Colonic mucosa (tissue), 4 donors: ENCODE measurements at regions of chr20 and their contacts with region 1.

Region 1: GRCh38 chr20:44683263-44684046 is 31.7 kb upstream of the CCN5 start:
- DNase-seq: peak; percentile 56
- H3K4me3 ChIP-seq: no peak overlapping the region
- H3K27ac ChIP-seq: no peak overlapping the region
- H3K4me1 ChIP-seq: no peaks in the 10 kb centered on the region
- H3K27me3 ChIP-seq: no peaks in the 10 kb centered on the region
- CTCF ChIP-seq: peak; percentile 56

Region 2: DNA sequence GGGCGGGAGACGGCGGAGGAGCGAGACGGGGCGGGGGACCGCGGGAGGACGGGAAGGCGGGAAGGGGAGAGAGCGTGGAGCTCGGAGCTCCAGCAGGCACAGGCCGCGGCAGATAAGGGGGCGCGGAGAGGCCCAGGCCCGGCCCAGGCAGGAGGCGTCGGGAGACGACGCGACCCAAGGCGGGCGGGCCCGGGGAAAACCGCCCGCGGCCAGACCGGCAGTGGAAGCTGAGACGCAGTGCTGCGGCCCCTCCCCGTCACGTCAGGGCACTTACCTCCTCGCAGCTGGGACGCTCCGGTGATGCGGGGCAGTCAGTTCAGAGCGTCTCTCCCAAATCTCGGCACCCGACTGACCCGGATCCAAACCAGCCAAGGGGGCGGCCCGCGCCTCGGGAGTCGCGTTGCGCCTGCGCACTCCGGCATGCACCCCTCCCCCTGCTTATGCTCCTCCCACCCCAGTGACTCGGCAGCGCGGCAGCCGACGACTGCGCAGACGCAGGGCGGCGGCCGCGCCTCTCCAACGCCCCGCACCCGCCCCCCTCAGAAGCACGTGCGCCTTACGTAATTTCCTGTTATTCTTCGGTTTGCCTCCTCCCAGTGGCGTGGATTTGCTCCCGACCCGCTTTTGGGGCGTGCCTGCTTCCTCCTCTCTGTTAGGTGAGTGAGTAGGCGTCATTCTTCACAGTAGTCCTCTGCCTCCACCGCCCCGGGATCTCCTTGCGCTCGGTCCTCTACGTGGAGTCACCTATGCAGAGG is 472.9 kb before region 1 on chr20 and contains the start of gene OSER1:
- intact Hi-C with region 1: loop called (anchors 10 kb)
- DNase-seq: peak; percentile 99
- H3K4me3 ChIP-seq: peak within 1 kb of the TSS; percentile 89
- H3K27ac ChIP-seq: peak within 1 kb of the TSS; percentile 99
- H3K4me1 ChIP-seq: peaks cover 3% of the 10 kb centered on the region
- H3K27me3 ChIP-seq: no peaks in the 10 kb centered on the region
- CTCF ChIP-seq: no peak
- total RNA-seq, gene OSER1: 23.3 to 31.9 TPM

Region 3: GRCh38 chr20:44733341-44734069 is 50.0 kb after region 1 on chr20:
- intact Hi-C with region 1: loop called (anchors 1 kb)
- DNase-seq: peak; percentile 63
- H3K4me3 ChIP-seq: no peak overlapping the region
- H3K27ac ChIP-seq: no peak overlapping the region
- H3K4me1 ChIP-seq: no peaks in the 10 kb centered on the region
- H3K27me3 ChIP-seq: no peaks in the 10 kb centered on the region
- CTCF ChIP-seq: peak; percentile 81